IMR-90 (cell line): ENCODE measurements at regions of chr2 and their contacts with region 1.

Region 1: DNA sequence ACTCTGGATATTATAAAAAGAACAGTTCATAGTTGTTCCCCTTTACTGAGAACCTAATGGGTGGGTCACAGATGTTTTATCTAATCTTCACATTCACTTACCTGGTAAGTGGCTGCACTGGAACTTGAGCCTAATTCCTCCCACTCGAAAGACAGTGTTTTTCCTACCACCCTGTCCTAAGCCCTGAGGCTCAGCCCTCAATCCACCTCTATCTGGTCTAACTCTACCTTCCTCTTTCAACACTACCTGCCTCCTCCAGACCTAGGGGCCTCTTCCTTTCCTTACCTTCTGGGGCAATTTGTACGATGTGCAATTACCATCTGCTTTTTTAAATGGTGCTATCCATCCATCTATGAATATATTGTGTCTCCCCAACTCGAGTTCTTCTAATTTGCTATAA is 9.7 kb upstream of the KIF3C start:
- DNase-seq: no peak
- ATAC-seq: no peak
- H3K4me3 ChIP-seq: no peak overlapping the region
- H3K27ac ChIP-seq: no peak overlapping the region
- H3K4me1 ChIP-seq: no peaks in the 10 kb centered on the region
- H3K27me3 ChIP-seq: peaks cover 2% of the 10 kb centered on the region; the same call in 1 of the 2 replicates
- CTCF ChIP-seq: no peak
- POLR2A ChIP-seq: no peak
- RAD21 ChIP-seq: no peak

Region 2: GRCh38 chr2:25903216-25903776 is 88.7 kb before region 1 on chr2:
- CTCF ChIA-PET with region 1: no interaction called
- POLR2A ChIA-PET with region 1: no interaction called
- dilution Hi-C with region 1: no loop called
- in situ Hi-C with region 1: no loop called
- intact Hi-C with region 1: no loop called
- DNase-seq: no peak
- ATAC-seq: no peak
- H3K4me3 ChIP-seq: no peak overlapping the region
- H3K27ac ChIP-seq: no peak overlapping the region
- H3K4me1 ChIP-seq: no peaks in the 10 kb centered on the region
- H3K27me3 ChIP-seq: peaks cover 3% of the 10 kb centered on the region; the same call in 1 of the 2 replicates
- CTCF ChIP-seq: no peak
- POLR2A ChIP-seq: no peak
- RAD21 ChIP-seq: no peak

Region 3: GRCh38 chr2:26033818-26034636 is 42.1 kb after region 1 on chr2 and contains the start of gene RAB10:
- CTCF ChIA-PET with region 1: no interaction called
- POLR2A ChIA-PET with region 1: no interaction called
- dilution Hi-C with region 1: no loop called
- in situ Hi-C with region 1: no loop called
- intact Hi-C with region 1: loop called (anchors 2 kb)
- DNase-seq: peak; percentile 98
- ATAC-seq: peak; percentile 97
- H3K4me3 ChIP-seq: peak within 1 kb of the TSS; percentile 86
- H3K27ac ChIP-seq: peak within 1 kb of the TSS; percentile 91
- H3K4me1 ChIP-seq: no peaks in the 10 kb centered on the region
- H3K27me3 ChIP-seq: no peaks in the 10 kb centered on the region
- CTCF ChIP-seq: 0 out of 2 replicates have a peak, but pooled peaks have one; percentile 2
- POLR2A ChIP-seq: peak; percentile 90
- RAD21 ChIP-seq: no peak
- total RNA-seq, gene RAB10: 30.1 and 79.7 TPM in 2 replicates

Region 4: GRCh38 chr2:26088032-26088643 is 96.2 kb after region 1 on chr2:
- CTCF ChIA-PET with region 1: interaction called, 3 read pairs
- POLR2A ChIA-PET with region 1: no interaction called
- dilution Hi-C with region 1: no loop called
- in situ Hi-C with region 1: no loop called
- intact Hi-C with region 1: loop called (anchors 10 kb)
- DNase-seq: peak; percentile 36
- ATAC-seq: peak; percentile 82
- H3K4me3 ChIP-seq: no peak overlapping the region
- H3K27ac ChIP-seq: no peak overlapping the region
- H3K4me1 ChIP-seq: no peaks in the 10 kb centered on the region; the same call in 1 of the 2 replicates
- H3K27me3 ChIP-seq: no peaks in the 10 kb centered on the region
- CTCF ChIP-seq: peak; percentile 63
- POLR2A ChIP-seq: no peak
- RAD21 ChIP-seq: peak; percentile 64

Region 5: GRCh38 chr2:26745609-26746327 is 753.8 kb after region 1 on chr2:
- CTCF ChIA-PET with region 1: no interaction called
- POLR2A ChIA-PET with region 1: no interaction called
- dilution Hi-C with region 1: no loop called
- in situ Hi-C with region 1: no loop called
- intact Hi-C with region 1: no loop called
- DNase-seq: peak; percentile 78
- ATAC-seq: peak; percentile 90
- H3K4me3 ChIP-seq: no peak overlapping the region
- H3K27ac ChIP-seq: no peak overlapping the region
- H3K4me1 ChIP-seq: peaks cover 2% of the 10 kb centered on the region
- H3K27me3 ChIP-seq: peaks cover 5% of the 10 kb centered on the region; the same call in 1 of the 2 replicates
- CTCF ChIP-seq: peak; percentile 96
- POLR2A ChIP-seq: no peak
- RAD21 ChIP-seq: peak; percentile 95